ENCODE measurements at regions of chr2 and their contacts with region 1.

Region 1: DNA sequence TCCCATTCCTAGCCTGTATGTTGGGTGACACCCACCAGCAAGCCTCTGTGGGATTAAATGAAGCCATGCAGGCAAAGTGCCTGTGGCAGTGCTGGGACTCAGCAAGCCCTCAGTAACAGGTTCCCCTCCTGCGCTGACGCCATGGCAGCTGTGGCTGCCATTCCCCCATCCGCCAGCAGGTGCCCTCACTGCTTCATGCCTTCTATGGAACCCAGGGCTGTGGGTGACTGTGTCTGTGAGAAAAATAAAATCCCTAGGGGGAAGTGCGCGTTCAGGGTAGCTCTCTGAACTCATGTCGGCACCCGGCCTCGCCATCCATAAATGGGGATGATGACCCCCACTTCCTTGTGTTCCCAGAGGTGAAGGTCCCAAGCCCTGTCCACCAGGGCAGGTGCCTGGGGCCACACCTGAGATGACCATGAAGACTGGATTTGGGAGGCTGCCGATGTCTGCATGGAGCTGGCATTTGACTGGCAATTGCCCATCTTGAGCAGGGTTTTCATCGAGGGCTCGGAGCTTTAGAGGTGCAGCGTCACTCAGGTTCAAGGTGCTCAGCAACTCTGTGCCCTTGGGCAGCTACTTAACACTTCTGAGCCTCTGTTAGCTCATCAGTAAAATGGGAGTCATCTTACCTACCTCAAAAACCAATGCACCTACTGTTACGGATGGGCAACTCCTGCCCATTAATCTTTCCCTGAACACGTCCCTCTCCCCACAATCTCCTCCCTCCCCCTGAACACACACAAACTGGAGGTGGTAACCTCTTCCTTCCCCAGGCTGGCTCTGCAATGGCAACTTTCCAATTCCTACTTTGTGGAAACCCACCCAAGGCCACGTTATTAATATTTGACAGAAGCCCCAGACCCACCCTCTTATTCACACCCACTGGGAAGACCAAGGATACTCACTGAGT is 2.9 kb upstream of the MAL start:
- DNase-seq: peak; percentile 65 to 82
- H3K4me3 ChIP-seq: no peak overlapping the region
- H3K27ac ChIP-seq: no peak overlapping the region
- H3K4me1 ChIP-seq: peaks cover 73% of the 10 kb centered on the region
- H3K27me3 ChIP-seq: no peaks in the 10 kb centered on the region
- CTCF ChIP-seq: peak; percentile 99

Region 2: GRCh38 chr2:94986392-94986963 is 36.1 kb before region 1 on chr2:
- CTCF ChIA-PET with region 1: interaction called, 15 read pairs
- POLR2A ChIA-PET with region 1: no interaction called
- intact Hi-C with region 1: loop called (anchors 1 kb)
- DNase-seq: peak; percentile 63 to 65
- H3K4me3 ChIP-seq: no peak overlapping the region
- H3K27ac ChIP-seq: no peak overlapping the region
- H3K4me1 ChIP-seq: peaks cover 14% of the 10 kb centered on the region
- H3K27me3 ChIP-seq: no peaks in the 10 kb centered on the region
- CTCF ChIP-seq: peak; percentile 96

Region 3: DNA sequence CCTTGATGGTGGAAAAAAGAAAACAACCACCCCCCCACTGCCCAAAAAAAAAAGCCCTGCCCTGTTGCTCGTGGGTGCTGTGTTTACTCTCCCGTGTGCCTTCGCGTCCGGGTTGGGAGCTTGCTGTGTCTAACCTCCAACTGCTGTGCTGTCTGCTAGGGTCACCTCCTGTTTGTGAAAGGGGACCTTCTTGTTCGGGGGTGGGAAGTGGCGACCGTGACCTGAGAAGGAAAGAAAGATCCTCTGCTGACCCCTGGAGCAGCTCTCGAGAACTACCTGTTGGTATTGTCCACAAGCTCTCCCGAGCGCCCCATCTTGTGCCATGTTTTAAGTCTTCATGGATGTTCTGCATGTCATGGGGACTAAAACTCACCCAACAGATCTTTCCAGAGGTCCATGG is 31.0 kb after region 1 on chr2:
- CTCF ChIA-PET with region 1: interaction called, 14 read pairs
- POLR2A ChIA-PET with region 1: interaction called, 4 read pairs
- intact Hi-C with region 1: loop called (anchors 1 kb)
- DNase-seq: no peak
- H3K4me3 ChIP-seq: no peak overlapping the region
- H3K27ac ChIP-seq: peak overlapping the region; percentile 92; the same call in 1 of the 2 replicates
- H3K4me1 ChIP-seq: peaks cover 98% of the 10 kb centered on the region
- H3K27me3 ChIP-seq: no peaks in the 10 kb centered on the region
- CTCF ChIP-seq: peak; percentile 40; the same call in 1 of the 2 replicates

Region 4: DNA sequence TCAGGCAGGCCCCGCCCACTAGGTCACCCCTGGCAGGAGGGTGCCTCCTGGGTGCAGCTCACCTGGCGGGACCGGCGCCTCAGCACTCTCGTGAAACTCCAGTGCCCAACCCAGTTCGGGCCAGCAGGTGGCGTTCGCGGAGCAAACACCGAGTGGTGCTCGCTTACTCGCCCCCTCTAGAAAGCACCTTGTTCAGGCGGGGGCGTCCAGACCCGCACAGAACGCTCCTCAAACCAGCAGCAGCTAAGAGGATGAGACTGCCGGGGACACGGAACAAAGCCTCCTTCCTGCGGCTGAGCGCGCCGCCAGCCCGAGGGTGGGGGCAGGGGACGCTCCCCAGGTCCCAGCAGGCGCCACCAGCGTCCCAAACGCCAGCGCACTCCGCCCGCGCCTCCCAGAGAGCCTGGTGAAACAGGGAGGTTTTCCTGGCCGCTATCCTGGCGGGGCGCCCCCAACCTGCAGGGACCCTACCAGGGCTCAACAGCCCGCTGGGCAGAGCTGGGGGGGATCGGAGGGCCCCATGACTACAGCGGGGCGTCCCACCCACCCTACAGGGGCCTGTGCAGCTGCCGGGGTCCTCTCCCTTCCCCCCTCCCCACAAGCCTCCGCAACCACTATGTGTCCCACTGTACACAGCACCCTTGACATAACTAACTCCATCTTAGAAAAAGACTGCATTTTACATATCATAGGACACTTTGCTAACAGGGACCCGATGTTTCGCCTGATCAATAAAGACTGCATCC is 54.4 kb after region 1 on chr2:
- CTCF ChIA-PET with region 1: interaction called, 62 read pairs
- POLR2A ChIA-PET with region 1: interaction called, 3 read pairs
- intact Hi-C with region 1: loop called (anchors 1 kb)
- DNase-seq: peak; percentile 96 to 99
- H3K4me3 ChIP-seq: peak overlapping the region; percentile 70
- H3K27ac ChIP-seq: peak overlapping the region; percentile 33; the same call in 1 of the 2 replicates
- H3K4me1 ChIP-seq: peaks cover 28% of the 10 kb centered on the region
- H3K27me3 ChIP-seq: no peaks in the 10 kb centered on the region
- CTCF ChIP-seq: peak; percentile 97

Region 5: GRCh38 chr2:95106081-95106480 is 83.5 kb after region 1 on chr2:
- CTCF ChIA-PET with region 1: no interaction called
- POLR2A ChIA-PET with region 1: no interaction called
- intact Hi-C with region 1: no loop called
- DNase-seq: no peak
- H3K4me3 ChIP-seq: no peak overlapping the region
- H3K27ac ChIP-seq: no peak overlapping the region
- H3K4me1 ChIP-seq: no peaks in the 10 kb centered on the region
- H3K27me3 ChIP-seq: no peaks in the 10 kb centered on the region
- CTCF ChIP-seq: no peak